ENCODE measurements at regions of chr1 and their contacts with region 1.

Region 1: DNA sequence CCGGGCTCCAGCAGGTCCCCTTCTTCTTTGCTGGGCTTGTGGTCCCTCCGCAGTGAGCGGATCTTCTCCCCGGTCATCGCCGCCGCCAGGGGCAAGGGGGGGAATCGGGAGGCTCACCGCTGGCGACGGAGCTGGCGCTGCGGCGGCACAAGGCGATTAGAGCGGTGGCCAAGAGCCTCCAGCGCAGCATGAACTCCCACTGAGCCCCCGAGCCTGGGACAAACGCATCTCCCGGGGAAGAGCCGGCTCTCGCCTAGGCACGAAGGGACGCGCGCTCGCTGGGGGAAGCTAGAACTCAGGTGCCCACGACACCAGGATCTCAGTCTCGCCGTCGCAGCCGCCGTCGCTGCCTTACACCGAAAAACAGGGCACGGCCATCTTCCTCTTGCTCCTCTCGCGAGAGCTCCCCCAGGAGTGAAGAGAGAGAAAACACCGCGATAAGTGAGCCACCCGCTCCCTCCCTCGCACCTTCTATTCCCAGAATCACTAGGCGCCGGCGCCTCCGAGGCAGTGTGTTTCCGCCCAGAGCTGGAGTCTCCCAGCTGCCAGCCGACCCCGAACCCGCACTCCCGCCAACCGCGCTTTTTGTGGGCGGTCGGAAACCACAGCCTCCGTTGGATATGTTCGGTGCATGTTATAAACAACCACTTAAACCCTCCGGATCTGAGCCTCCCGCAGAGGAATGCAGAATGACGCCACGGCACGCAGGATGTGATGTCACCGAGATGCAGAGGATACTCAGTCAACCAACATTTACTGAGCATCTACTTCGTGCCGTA is at the start of gene ANKRD13C:
- H3K4me3 ChIP-seq: peak within 1 kb of the TSS; percentile 76
- H3K27ac ChIP-seq: peak within 1 kb of the TSS; percentile 81
- H3K4me1 ChIP-seq: no peaks in the 10 kb centered on the region; the same call in 1 of the 2 replicates
- CTCF ChIP-seq: peak; percentile 90

Region 2: GRCh38 chr1:70221241-70222121 is 133.0 kb before region 1 on chr1 and contains the start of gene SRSF11:
- CTCF ChIA-PET with region 1: no interaction called
- POLR2A ChIA-PET with region 1: interaction called, 12 read pairs
- H3K4me3 ChIP-seq: peak within 1 kb of the TSS; percentile 93
- H3K27ac ChIP-seq: peak within 1 kb of the TSS; percentile 99
- H3K4me1 ChIP-seq: peaks cover 5% of the 10 kb centered on the region
- CTCF ChIP-seq: peak; percentile 65

Region 3: DNA sequence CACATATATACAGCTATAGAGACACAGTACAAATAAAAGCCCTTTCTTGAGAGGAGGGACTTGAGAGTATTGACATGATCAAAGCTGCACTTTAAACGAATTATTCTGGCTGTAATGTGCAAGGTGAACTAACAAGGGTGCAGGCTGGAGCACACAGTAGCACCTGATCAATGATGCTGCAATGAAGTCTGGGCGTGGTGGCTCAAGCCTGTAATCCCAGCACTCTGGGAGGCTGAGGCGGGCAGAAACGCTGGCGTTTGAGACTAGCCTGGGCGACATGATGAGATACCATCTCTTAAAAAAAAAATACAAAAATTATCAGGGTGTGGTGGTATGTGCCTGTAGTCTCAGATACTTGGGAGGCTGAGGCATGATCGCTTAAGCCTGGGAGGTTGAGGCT is 42.5 kb after region 1 on chr1:
- CTCF ChIA-PET with region 1: no interaction called
- POLR2A ChIA-PET with region 1: interaction called, 12 read pairs
- H3K4me3 ChIP-seq: no peak overlapping the region
- H3K27ac ChIP-seq: no peak overlapping the region
- H3K4me1 ChIP-seq: no peaks in the 10 kb centered on the region
- CTCF ChIP-seq: no peak

Region 4: GRCh38 chr1:70442490-70442889 is 88.0 kb after region 1 on chr1:
- CTCF ChIA-PET with region 1: no interaction called
- POLR2A ChIA-PET with region 1: no interaction called
- H3K4me3 ChIP-seq: no peak overlapping the region
- H3K27ac ChIP-seq: no peak overlapping the region
- H3K4me1 ChIP-seq: no peaks in the 10 kb centered on the region
- CTCF ChIP-seq: no peak

Region 5: DNA sequence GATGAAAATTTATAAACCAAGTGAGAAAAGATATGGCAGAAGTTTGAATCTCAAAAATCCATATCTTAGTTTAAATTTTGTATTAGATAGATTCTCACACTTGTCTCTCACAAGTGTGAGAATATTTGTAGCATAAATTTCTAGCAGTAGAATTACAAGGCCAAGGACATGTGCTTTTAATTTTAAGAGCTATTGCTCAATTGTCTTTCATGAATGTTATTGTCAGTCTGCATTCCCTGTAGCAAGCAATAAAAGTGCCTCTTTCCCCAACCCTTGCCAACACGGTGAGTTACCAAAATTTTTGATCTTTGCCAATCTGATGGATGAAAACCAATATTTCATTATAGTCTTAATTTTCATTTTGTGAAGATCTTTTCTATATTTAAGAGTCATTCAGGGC is 120.5 kb after region 1 on chr1:
- CTCF ChIA-PET with region 1: no interaction called
- POLR2A ChIA-PET with region 1: no interaction called
- H3K4me3 ChIP-seq: no peak overlapping the region
- H3K27ac ChIP-seq: no peak overlapping the region
- H3K4me1 ChIP-seq: no peaks in the 10 kb centered on the region
- CTCF ChIP-seq: no peak

Measured in HEK293 (cell line).